Common myeloid progenitor, CD34-positive (primary cell): ENCODE measurements at regions of chr3 and their contacts with region 1.

Region 1: DNA sequence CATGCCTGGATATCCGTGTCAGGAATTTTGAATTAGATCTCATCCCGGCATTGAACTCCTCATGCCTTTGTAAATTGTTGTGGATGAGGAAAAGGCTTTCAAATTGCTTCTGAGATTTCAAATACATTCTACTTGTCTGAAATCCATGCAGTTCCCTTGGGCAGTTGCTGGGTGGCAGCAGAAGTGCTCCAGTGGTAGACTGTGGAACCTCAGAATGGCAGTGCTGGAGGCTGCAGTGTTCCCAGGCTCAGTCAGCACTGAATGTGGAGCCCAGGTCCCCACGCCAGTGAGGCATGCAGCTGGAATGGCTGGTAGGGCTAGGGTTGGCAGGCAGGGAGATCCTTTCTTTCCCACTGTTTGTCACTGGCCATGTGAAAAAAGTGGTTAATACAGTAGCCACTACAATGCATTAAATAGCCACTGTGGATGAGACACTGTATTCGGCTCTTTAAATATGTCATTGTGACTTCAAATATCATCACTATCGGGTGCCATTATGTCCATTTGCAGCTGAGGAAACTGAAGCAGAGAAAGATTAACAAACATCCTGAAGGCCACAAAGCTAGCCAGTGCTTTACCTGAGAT is 98.6 kb downstream of the TPRG1 start:
- DNase-seq: peak; percentile 40 to 61 (median 60)
- H3K4me3 ChIP-seq: no peak overlapping the region
- H3K27ac ChIP-seq: no peak overlapping the region
- H3K4me1 ChIP-seq: no peaks in the 10 kb centered on the region
- H3K27me3 ChIP-seq: peaks cover 0 to 8% (median 0%) of the 10 kb centered on the region in 5 experiments

Region 2: GRCh38 chr3:189947948-189948723 is 677.8 kb after region 1 on chr3:
- CTCF ChIA-PET with region 1: interaction called, 114 read pairs
- POLR2A ChIA-PET with region 1: no interaction called
- DNase-seq: peak; percentile 28 to 51 (median 42)
- H3K4me3 ChIP-seq: no peak overlapping the region
- H3K27ac ChIP-seq: no peak overlapping the region
- H3K4me1 ChIP-seq: no peaks in the 10 kb centered on the region
- H3K27me3 ChIP-seq: peaks cover 0 to 13% (median 6%) of the 10 kb centered on the region in 5 experiments